ENCODE measurements at regions of chr1 and their contacts with region 1.

Region 1: DNA sequence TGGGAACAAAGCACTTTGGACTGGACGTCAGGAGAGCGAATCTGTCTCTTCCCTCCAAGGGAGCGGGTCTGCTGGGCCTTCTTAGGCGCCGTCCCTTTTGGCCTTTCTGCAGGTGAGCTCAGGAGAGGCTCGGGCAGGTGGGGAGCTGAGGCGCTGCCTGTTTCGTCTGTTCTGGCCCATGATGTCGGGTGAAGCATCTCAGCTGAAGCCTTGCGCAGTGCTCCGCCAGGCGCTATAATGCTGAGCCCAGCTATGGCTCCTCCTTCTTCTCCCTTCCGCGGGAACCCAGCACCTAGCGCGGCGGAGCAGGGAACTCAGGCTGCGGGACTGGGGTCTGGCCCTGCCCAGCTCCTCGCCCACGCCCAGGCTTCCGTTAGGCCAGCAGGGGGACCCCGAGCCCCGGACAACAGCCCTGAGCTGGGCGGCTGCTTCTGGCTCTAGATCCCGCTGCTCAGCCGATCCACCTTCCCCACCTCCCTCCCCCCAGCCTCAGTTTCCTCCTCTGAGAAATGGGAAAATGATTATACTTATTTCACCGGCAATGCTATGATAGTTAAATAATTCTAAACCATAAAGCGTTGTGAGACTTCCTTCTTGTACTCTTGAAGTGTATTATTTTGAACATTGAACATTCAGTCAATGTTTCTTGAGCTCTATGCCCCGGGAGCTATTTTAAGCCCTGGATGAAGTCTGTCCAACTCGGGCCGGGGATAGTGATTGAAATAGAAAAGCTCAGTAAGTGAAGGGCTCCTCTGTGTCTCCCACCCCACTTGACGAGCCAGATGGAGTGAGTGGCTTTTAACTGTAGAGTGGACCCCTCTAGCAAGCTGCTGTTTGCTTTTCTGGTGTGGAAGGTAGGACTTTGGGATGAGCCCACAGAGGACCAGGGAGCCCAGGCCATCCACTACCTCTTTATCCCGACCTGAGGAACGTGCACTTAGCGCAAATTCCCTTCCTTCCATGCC is 9.6 kb upstream of the ADORA1 start:
- DNase-seq: peak; percentile 58
- H3K4me3 Mint-ChIP-seq: no peak overlapping the region
- H3K27ac Mint-ChIP-seq: no peak overlapping the region
- H3K4me1 Mint-ChIP-seq: peaks cover 4% of the 10 kb centered on the region
- H3K27me3 Mint-ChIP-seq: peaks cover 35% of the 10 kb centered on the region

Region 2: GRCh38 chr1:203140743-203141520 is 23.0 kb after region 1 on chr1:
- CTCF ChIA-PET with region 1: no interaction called
- POLR2A ChIA-PET with region 1: no interaction called
- intact Hi-C with region 1: no loop called
- DNase-seq: no peak
- H3K4me3 Mint-ChIP-seq: no peak overlapping the region
- H3K27ac Mint-ChIP-seq: no peak overlapping the region
- H3K4me1 Mint-ChIP-seq: peaks cover 3% of the 10 kb centered on the region
- H3K27me3 Mint-ChIP-seq: peaks cover 4% of the 10 kb centered on the region

Region 3: GRCh38 chr1:203172128-203173010 is 54.5 kb after region 1 on chr1:
- CTCF ChIA-PET with region 1: interaction called, 18 read pairs
- POLR2A ChIA-PET with region 1: no interaction called
- intact Hi-C with region 1: loop called (anchors 5 kb)
- DNase-seq: peak; percentile 58
- H3K4me3 Mint-ChIP-seq: no peak overlapping the region
- H3K27ac Mint-ChIP-seq: no peak overlapping the region
- H3K4me1 Mint-ChIP-seq: no peaks in the 10 kb centered on the region
- H3K27me3 Mint-ChIP-seq: no peaks in the 10 kb centered on the region

Region 4: GRCh38 chr1:203765029-203765837 is 647.3 kb after region 1 on chr1 and contains the start of gene LAX1:
- CTCF ChIA-PET with region 1: no interaction called
- POLR2A ChIA-PET with region 1: no interaction called
- intact Hi-C with region 1: no loop called
- DNase-seq: peak; percentile 90
- H3K4me3 Mint-ChIP-seq: peak within 1 kb of the TSS; percentile 94
- H3K27ac Mint-ChIP-seq: peak within 1 kb of the TSS; percentile 100
- H3K4me1 Mint-ChIP-seq: peaks cover 40% of the 10 kb centered on the region
- H3K27me3 Mint-ChIP-seq: no peaks in the 10 kb centered on the region
- total RNA-seq, gene LAX1: 14.0 to 14.3 TPM